Cardiac septum (tissue), 1 donor: ENCODE measurements at regions of chr12 and their contacts with region 1.

Region 1: GRCh38 chr12:2284857-2285256 is 232.1 kb downstream of the CACNA1C start:
- DNase-seq: peak; percentile 93

Region 2: GRCh38 chr12:1795785-1796514 is 488.9 kb before region 1 on chr12:
- intact Hi-C with region 1: loop called (anchors 10 kb)
- DNase-seq: peak; percentile 97

Region 3: DNA sequence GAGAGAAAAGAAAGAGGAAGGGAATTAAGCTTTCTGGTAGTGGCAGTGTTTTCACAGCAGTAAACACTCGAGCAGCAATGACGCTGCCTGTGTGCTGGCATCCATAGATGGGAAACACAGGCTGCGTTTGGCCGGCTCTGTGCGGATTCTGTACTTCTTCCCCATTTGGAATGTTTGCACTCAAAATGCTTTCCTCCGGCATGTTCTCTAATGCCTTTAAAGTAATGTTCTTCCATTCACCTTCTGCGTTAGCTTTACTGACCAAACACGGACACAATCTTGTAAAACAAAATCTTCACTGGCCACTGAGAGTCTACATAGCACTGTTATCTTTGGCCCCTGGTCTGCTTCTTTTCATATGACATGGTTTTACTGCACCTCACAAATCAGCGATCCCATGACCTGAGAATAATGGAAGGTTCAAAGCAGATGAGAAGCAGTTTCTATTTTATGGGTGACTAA is 312.0 kb before region 1 on chr12:
- intact Hi-C with region 1: loop called (anchors 10 kb)
- DNase-seq: no peak

Region 4: GRCh38 chr12:2163172-2163941 is 121.5 kb before region 1 on chr12:
- intact Hi-C with region 1: loop called (anchors 5 kb)
- DNase-seq: peak; percentile 92

Region 5: DNA sequence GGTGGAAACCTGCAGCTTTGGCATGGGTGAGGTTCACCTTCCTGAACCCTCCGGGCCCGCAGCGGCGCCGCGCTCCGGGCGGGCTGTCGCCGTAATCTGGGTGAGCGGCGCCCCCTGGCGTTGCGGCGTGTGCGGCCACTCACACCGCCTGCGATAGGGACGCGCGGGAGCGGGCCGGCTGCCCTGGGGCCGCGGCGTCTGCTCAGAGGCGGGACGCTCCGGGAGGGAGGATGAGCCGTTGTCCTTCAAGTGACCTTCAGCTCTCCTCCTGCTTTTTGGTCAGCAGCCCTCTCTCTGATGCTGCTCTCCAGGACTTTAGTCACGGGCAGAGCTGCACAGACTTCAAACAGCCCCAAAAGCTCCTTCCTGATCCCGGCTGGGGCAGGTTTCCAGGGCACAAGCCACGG is 298.2 kb after region 1 on chr12:
- intact Hi-C with region 1: loop called (anchors 10 kb)
- DNase-seq: peak; percentile 80